ENCODE measurements at regions of chr14 and their contacts with region 1.

Region 1: DNA sequence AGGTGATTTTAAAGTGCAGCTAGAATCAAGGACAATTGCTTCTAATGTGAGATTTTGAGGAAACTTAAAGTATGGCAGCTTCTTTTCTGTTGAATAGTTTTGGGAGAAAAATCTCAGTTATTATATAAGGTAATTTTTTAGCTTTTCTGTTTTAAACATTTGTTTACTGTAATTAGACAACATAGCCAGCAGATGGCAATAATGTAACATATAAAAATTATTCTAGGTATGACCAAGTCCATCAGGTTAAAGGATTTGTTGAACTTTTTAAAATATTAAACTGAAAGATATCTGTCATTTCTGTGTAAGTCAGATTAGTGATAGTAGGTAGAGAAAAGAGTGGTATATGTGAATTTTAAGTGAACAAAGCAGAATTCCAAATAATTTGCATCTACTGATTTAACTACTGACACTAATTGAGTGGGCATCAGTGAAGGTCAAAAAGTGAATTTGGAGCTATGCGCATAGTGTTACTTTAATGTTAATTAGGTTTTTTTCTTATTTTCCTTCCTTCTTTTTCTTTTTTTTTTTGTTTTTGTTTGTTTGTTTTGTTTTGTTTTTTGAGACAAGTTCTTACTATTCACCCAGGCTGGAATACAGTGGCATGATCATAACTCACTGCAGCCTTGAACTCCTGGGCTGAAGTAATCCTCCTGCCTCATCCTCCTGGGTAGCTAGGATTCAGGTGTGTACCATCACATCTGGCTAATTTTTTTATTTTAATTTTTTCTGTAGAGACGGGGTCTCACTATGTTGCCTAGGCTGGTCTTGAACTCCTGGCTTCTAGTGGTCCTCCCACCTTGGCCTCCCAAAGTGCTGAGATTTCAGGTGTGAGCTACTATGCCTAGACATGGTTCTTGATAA is 18.6 kb downstream of the PRORP start:
- DNase-seq: no peak
- ATAC-seq: no peak
- H3K4me3 Mint-ChIP-seq: no peak overlapping the region
- H3K27ac Mint-ChIP-seq: no peak overlapping the region
- H3K4me1 Mint-ChIP-seq: peaks cover 14% of the 10 kb centered on the region
- H3K27me3 Mint-ChIP-seq: no peaks in the 10 kb centered on the region

Region 2: DNA sequence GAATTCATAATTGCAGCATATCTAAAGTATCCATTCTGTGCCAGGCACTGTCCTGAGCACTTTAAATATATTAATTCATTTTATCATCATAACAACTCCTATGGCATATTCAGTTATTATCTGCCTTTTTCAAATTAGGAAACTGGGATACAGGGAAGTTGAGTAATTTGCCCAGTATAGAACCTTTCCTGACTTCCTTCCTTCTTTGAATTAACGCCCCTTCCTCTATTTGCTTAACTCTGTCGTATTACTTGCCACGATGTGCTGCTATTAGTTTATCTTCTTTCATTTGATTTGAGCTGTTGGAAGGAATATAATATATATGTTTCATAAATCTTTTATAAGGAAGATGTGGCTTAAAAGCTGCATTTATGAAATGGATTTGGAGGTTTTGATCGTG is 120.2 kb before region 1 on chr14:
- CTCF ChIA-PET with region 1: no interaction called
- POLR2A ChIA-PET with region 1: no interaction called
- intact Hi-C with region 1: no loop called
- DNase-seq: no peak
- ATAC-seq: no peak
- H3K4me3 Mint-ChIP-seq: no peak overlapping the region
- H3K27ac Mint-ChIP-seq: no peak overlapping the region
- H3K4me1 Mint-ChIP-seq: no peaks in the 10 kb centered on the region
- H3K27me3 Mint-ChIP-seq: no peaks in the 10 kb centered on the region

Region 3: GRCh38 chr14:35154016-35154415 is 13.1 kb after region 1 on chr14:
- CTCF ChIA-PET with region 1: interaction called, 23 read pairs
- POLR2A ChIA-PET with region 1: interaction called, 3 read pairs
- intact Hi-C with region 1: no loop called
- DNase-seq: no peak
- ATAC-seq: no peak
- H3K4me3 Mint-ChIP-seq: no peak overlapping the region
- H3K27ac Mint-ChIP-seq: no peak overlapping the region
- H3K4me1 Mint-ChIP-seq: peaks cover 32% of the 10 kb centered on the region
- H3K27me3 Mint-ChIP-seq: no peaks in the 10 kb centered on the region

Region 4: DNA sequence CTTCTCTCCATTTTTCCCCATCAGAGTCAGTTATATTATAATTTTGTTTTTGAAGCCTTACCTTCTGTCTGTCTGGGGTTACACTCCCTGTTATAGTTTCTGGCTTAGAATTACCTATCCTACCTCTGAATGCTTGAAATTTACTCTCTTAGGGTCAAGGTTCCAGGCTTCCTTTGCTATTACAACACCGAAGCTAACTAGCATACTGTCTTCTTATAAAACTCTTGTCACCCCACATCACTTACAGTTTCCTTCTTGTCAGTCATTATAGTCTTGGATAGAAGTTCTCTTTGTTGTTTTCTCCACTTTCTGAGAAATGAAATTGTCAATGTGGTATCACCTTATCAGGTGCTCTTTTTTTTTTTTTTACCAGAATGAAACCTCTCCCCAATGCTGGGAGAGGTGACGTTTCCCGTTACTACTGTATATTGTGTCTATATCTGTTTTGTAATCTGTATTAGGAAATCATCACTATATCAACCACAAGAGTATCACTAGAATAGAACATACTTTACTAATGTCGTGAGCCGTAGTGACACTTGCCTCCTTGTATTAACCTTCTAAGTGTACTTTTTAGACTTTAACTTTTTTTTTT is 82.0 kb after region 1 on chr14:
- CTCF ChIA-PET with region 1: interaction called, 16 read pairs
- POLR2A ChIA-PET with region 1: interaction called, 3 read pairs
- intact Hi-C with region 1: loop called in 1 of 2 experiments (anchors 5 kb)
- DNase-seq: no peak
- ATAC-seq: peak; percentile 55
- H3K4me3 Mint-ChIP-seq: no peak overlapping the region
- H3K27ac Mint-ChIP-seq: peak overlapping the region; percentile 57
- H3K4me1 Mint-ChIP-seq: peaks cover 29% of the 10 kb centered on the region
- H3K27me3 Mint-ChIP-seq: no peaks in the 10 kb centered on the region

Region 5: GRCh38 chr14:35229495-35230089 is 88.6 kb after region 1 on chr14:
- CTCF ChIA-PET with region 1: interaction called, 16 read pairs
- POLR2A ChIA-PET with region 1: interaction called, 3 read pairs
- intact Hi-C with region 1: loop called (anchors 1 to 5 kb)
- DNase-seq: no peak
- ATAC-seq: peak; percentile 63
- H3K4me3 Mint-ChIP-seq: no peak overlapping the region
- H3K27ac Mint-ChIP-seq: peak overlapping the region; percentile 51
- H3K4me1 Mint-ChIP-seq: peaks cover 27% of the 10 kb centered on the region
- H3K27me3 Mint-ChIP-seq: no peaks in the 10 kb centered on the region

Region 6: GRCh38 chr14:35261774-35262173 is 120.8 kb after region 1 on chr14:
- CTCF ChIA-PET with region 1: no interaction called
- POLR2A ChIA-PET with region 1: no interaction called
- intact Hi-C with region 1: no loop called
- DNase-seq: no peak
- ATAC-seq: peak; percentile 36
- H3K4me3 Mint-ChIP-seq: no peak overlapping the region
- H3K27ac Mint-ChIP-seq: no peak overlapping the region
- H3K4me1 Mint-ChIP-seq: peaks cover 5% of the 10 kb centered on the region
- H3K27me3 Mint-ChIP-seq: no peaks in the 10 kb centered on the region

Region 7: GRCh38 chr14:35331605-35332516 is 190.9 kb after region 1 on chr14:
- CTCF ChIA-PET with region 1: interaction called, 7 read pairs
- POLR2A ChIA-PET with region 1: no interaction called
- intact Hi-C with region 1: loop called in 1 of 2 experiments (anchors 5 kb)
- DNase-seq: no peak
- ATAC-seq: no peak
- H3K4me3 Mint-ChIP-seq: no peak overlapping the region
- H3K27ac Mint-ChIP-seq: peak overlapping the region; percentile 96
- H3K4me1 Mint-ChIP-seq: peaks cover 32% of the 10 kb centered on the region
- H3K27me3 Mint-ChIP-seq: no peaks in the 10 kb centered on the region

Region 8: DNA sequence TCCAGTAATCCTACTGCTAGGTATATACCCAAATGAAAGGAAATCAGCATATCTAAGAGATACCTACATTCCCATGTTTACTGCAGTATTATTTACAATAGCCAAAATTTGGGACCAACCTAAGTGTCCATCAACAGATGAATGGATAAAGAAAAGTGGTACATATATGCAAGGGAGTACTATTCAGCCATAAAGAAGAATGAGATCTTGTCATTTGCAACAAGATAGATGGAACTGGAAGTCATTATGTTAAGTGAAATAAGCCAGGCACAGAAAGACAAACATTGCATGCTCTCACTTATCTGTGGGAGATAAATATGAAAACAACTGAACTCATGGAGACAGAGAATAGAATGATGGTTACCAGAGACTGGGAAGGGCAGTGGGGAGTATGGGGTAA is 502.6 kb after region 1 on chr14:
- CTCF ChIA-PET with region 1: no interaction called
- POLR2A ChIA-PET with region 1: no interaction called
- intact Hi-C with region 1: no loop called
- DNase-seq: no peak
- ATAC-seq: no peak
- H3K4me3 Mint-ChIP-seq: no peak overlapping the region
- H3K27ac Mint-ChIP-seq: no peak overlapping the region
- H3K4me1 Mint-ChIP-seq: no peaks in the 10 kb centered on the region
- H3K27me3 Mint-ChIP-seq: no peaks in the 10 kb centered on the region

Region 9: GRCh38 chr14:35687335-35687939 is 546.5 kb after region 1 on chr14:
- CTCF ChIA-PET with region 1: interaction called, 4 read pairs
- POLR2A ChIA-PET with region 1: no interaction called
- intact Hi-C with region 1: loop called in 1 of 2 experiments (anchors 2 kb)
- DNase-seq: peak; percentile 42
- ATAC-seq: peak; percentile 51
- H3K4me3 Mint-ChIP-seq: no peak overlapping the region
- H3K27ac Mint-ChIP-seq: no peak overlapping the region
- H3K4me1 Mint-ChIP-seq: peaks cover 16% of the 10 kb centered on the region
- H3K27me3 Mint-ChIP-seq: no peaks in the 10 kb centered on the region

Measured in activated CD4-positive, alpha-beta T cell treated with anti-CD3 and anti-CD28 coated beads for 36 hours (primary cell).